Activated T-helper 1 cell treated with anti-CD3 and anti-CD28 coated beads, Interleukin-12 subunit alpha, Interleukin-12 subunit beta, Interleukin-2, Interleukin-4 antibody, amounts not matched to agents 30 ng/mL and 10 ng/mL and 1 ng/mL, durations not matched to agents 14 hours and 24 hours and 36 hours (primary cell): ENCODE measurements at regions of chr3 and their contacts with region 1.

Region 1: DNA sequence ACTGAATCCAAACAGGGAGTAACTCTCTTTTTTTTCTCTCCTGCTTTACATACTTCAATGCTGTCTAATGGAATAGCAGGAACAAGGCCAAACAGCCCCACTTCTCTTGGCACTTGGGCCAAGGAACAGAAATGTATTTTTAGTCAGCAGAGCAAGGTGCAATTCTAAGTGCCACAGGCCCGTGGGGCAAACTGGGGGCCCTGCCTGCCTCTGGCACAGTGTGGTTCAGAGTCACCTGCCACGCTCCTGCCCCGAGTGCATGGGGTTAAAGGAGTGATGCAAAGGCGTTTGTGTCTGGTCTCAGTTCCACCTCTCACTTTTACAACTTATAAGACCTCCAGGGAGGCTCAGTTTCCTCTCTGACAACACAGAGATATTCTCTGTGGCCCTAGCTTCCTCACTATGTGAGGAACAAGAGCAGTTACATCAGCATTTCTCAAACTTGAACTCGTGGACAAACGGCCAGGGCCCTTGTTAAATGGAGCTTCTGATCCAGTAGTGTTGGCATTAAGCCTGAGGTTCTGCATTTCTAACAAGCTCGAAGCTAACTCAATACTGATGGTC is 51.3 kb downstream of the LRIG1 start:
- DNase-seq: no peak
- H3K4me3 Mint-ChIP-seq: no peak overlapping the region
- H3K27ac Mint-ChIP-seq: no peak overlapping the region
- H3K4me1 Mint-ChIP-seq: peaks cover 26% of the 10 kb centered on the region
- H3K27me3 Mint-ChIP-seq: no peaks in the 10 kb centered on the region

Region 2: DNA sequence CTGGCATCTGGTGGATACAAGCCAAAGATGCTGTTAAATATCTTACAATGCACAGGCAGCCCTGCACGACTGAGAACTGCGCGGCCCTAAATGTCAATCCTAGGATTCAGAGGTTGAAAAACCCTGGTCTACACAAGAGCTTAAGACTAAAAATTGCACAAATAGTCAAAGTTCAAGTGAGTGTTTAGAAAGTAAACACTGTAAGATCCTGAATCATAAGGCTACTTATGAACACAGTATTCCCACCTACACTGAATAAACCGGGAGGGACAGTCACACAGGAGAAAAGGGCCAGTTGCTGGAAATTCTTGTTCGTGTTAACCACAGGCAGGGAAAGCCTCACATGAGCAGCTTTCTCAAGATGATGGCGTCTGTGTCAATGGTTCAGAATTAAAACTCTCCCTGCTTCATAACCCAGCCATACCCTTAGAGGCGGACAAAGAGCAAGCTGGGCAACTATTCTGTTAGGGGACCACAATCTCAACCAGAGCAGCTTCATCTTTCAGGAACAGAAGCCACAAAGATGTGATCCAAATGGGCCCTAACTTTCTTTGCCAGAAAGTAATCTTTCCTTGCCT is 13.7 kb after region 1 on chr3:
- intact Hi-C with region 1: loop called (anchors 2 kb)
- DNase-seq: no peak
- H3K4me3 Mint-ChIP-seq: no peak overlapping the region
- H3K27ac Mint-ChIP-seq: no peak overlapping the region
- H3K4me1 Mint-ChIP-seq: peaks cover 58% of the 10 kb centered on the region
- H3K27me3 Mint-ChIP-seq: no peaks in the 10 kb centered on the region